Naive thymus-derived CD4-positive, alpha-beta T cell (primary cell): ENCODE measurements at regions of chr20 and their contacts with region 1.

Region 1: DNA sequence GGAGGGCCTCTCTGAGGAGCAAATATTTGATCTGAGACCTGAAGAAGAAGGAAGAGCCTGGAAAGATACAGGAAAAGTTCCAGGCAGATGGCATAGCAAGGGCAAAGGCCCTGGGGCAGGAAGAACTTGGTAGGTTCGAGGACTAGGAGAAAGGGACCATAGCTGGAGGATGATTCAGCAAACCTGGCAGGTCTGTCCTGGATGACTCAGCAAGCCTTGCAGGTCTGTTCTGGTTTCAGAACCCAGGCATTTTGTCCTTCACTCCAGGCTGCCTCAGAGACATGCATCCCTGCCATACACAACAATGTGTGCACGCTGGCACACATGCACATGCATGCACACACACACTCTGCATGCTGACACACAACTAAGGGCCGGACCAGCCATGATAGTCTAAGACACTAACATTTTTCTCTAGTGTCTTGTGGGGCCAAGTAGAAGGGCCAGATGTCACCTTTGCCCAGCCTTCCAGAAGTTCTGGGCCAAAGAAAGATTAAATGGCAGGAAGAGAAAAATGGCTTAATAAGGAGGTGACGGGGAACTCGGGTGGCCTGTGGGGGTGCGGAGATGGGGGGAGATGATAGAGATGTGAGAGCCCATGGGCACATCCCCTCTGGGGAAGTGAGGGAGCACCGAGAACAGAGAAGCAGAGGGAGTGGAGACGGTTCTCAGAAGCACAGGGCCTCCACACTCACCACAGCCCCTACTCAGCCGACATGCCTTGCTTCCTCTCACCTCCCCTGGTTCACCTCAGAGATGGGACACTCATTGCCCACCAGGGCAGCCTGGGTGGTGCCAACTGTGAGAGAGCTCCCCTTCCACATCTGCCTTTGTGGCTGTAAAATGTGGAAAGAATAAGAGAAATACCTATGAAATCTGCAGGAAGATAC is 15.4 kb upstream of the TRIB3 start:
- DNase-seq: no peak
- ATAC-seq: no peak
- H3K4me3 ChIP-seq: no peak overlapping the region
- H3K4me3 Mint-ChIP-seq: peak overlapping the region; percentile 41 to 73 (median 58)
- H3K27ac ChIP-seq: no peak overlapping the region
- H3K27ac Mint-ChIP-seq: peak overlapping the region in 7 of 9 donors; percentile 49 to 96 (median 82)
- H3K4me1 ChIP-seq: peaks cover 0 to 20% of the 10 kb centered on the region in 2 donors
- H3K4me1 Mint-ChIP-seq: peaks cover 23 to 55% (median 47%) of the 10 kb centered on the region in 7 donors
- H3K27me3 ChIP-seq: no peaks in the 10 kb centered on the region
- H3K27me3 Mint-ChIP-seq: no peaks in the 10 kb centered on the region

Region 2: DNA sequence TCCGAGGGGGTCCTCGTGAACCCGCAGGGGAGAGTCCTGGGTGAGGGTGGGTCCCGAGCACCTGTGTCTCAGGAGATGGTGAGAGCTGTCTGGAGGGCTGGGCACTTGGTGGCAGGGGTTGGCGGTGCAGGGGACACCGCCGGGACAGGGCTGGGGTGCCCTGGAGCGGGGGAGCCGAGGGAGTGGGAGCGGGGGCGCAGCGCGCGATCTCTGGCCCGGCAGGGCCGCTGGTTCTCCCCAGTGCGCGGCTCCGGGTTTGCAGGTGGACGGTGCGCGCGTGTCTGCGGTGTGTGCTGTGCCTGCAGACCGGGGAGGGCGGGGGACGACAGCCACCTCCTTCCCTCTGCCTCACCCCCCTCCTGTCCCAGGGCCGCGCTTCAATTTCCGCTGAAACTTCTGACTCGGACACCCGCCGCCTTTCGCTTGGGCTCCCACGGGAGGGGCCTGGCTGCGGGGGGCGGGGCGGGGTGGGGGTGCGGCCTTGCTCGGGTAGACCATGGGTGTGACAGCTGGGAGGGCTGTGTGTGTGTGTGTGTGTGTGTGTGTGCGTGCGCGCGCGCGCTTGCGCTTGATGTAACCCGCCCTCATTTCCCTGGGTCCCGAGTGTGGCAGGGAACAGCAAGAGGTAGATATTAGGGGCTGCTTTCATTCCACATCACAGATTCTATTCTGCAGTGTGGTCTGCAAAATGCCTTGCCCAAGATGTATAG is 16.6 kb after region 1 on chr20:
- CTCF ChIA-PET with region 1: interaction called, 3 read pairs
- POLR2A ChIA-PET with region 1: interaction called, 4 read pairs
- intact Hi-C with region 1: loop called in 1 of 2 experiments (anchors 2 kb)
- DNase-seq: peak; percentile 41 to 75 (median 64)
- ATAC-seq: peak; percentile 81
- H3K4me3 ChIP-seq: peak overlapping the region; percentile 64
- H3K4me3 Mint-ChIP-seq: peak overlapping the region; percentile 66 to 91 (median 84)
- H3K27ac ChIP-seq: peak overlapping the region; percentile 73
- H3K27ac Mint-ChIP-seq: peak overlapping the region; percentile 55 to 86 (median 78)
- H3K4me1 ChIP-seq: no peaks in the 10 kb centered on the region
- H3K4me1 Mint-ChIP-seq: peaks cover 4 to 34% (median 13%) of the 10 kb centered on the region in 7 donors
- H3K27me3 ChIP-seq: no peaks in the 10 kb centered on the region
- H3K27me3 Mint-ChIP-seq: peaks cover 0 to 3% (median 0%) of the 10 kb centered on the region in 5 donors